ENCODE measurements at regions of chr10 and their contacts with region 1.

Region 1: DNA sequence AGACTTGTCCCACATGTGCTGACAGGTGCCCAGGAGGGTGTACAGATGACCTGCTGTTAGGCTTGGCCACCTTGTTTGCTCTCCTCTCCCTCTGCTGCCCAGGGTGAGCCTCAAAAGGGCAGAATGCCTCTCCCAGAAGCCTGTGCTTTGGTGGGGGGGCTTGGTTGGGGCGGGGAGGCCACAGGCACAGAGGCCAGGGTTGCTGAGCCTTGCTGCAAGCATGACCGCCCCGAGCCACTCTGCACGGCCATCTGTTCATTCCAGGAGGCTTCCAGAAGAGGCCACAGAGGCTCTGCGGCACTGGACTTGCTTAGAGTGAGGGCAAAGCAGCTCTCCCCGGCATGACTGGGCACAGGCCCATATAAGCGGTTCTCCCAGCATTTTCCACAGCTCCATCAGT is 190.8 kb downstream of the GLRX3 start:
- DNase-seq: no peak
- H3K4me3 ChIP-seq: no peak overlapping the region
- H3K27ac ChIP-seq: no peak overlapping the region
- H3K4me1 ChIP-seq: no peaks in the 10 kb centered on the region
- H3K27me3 ChIP-seq: no peaks in the 10 kb centered on the region
- CTCF ChIP-seq: no peak

Region 2: GRCh38 chr10:130282492-130283233 is 44.3 kb before region 1 on chr10:
- CTCF ChIA-PET with region 1: no interaction called
- dilution Hi-C with region 1: loop called (anchors 5 kb)
- in situ Hi-C with region 1: no loop called
- intact Hi-C with region 1: no loop called
- DNase-seq: no peak
- H3K4me3 ChIP-seq: no peak overlapping the region
- H3K27ac ChIP-seq: no peak overlapping the region
- H3K4me1 ChIP-seq: no peaks in the 10 kb centered on the region
- H3K27me3 ChIP-seq: no peaks in the 10 kb centered on the region
- CTCF ChIP-seq: no peak

Measured in mammary epithelial cell (primary cell).